Ovary (tissue), 10 donors: ENCODE measurements at regions of chr2 and their contacts with region 1.

Region 1: DNA sequence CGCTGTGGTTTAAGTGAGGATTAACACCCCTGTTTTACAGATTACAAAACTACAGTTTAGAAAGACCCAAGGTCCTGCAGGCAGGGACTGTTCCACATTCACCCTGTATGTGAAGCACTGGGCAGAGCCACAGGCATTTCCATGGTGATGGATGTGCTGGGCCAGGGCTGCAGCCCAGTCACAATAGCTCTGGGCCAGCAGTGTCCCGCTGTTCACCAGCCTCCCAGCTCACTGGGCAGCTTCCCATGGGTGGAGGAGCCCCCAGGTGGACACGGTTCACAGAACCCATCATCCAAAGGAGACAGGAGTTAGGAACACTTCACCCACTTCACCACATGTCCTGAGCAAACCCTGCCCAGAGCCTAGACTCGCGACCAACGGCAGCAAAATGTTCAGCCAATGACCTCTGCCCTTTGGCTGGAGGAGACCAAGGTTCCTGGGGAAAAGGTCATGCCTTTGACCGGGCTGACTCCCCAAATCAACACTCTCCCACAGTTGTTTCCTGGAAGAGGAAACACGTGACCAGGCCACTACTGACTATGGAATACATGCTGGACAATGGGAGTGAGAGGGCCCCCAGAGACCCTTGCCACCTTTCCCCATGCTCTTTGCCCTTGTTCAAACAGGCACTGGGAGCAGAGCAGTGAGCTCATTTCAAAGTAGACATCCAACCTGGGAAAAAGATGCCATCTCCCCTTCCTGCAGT is 28.0 kb upstream of the SLC35F6 start:
- DNase-seq: no peak
- H3K4me3 ChIP-seq: no peak overlapping the region
- H3K27ac ChIP-seq: no peak overlapping the region
- H3K4me1 ChIP-seq: peaks cover 4% of the 10 kb centered on the region
- H3K27me3 ChIP-seq: no peaks in the 10 kb centered on the region
- CTCF ChIP-seq: no peak
- EP300 ChIP-seq: no peak
- POLR2A ChIP-seq: no peak

Region 2: DNA sequence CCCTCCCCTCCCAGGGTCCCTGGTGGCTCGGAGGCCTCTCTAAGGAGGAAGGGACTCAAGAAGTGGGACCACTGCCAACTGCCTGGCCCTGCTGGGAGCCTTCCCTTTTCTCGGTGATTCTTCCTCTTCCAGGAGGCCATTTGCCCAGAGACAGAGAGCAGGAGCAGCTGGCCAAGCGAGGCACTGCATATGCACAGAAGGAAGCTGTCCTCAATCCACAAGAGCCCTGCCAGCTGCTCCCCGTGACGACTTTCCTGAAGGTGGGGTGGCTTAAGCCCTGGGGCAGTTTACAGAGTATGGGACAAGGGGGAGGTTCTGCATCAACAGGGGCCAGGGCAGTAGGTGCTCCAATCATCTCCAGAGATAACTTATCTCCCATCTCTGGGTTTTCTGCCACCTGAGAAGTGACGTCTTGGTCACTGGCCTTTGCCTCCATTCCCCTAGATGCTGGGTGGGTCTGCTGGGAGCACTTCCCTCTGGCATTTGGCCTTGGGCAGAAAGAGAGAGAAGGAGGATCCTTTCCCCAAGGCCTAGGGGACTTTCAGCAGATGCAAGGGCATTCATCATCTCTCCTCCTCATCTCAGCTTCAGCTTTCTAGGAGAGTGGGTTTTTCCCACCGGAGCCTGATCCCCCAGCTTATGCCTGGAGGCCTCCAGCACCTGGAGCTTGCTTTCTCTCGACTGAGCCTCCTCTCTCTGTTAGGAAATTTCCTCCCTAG is 123.4 kb before region 1 on chr2:
- intact Hi-C with region 1: loop called in 2 of 4 experiments (anchors 2 to 5 kb)
- DNase-seq: peak in 2 of 5 donors; percentile 35 to 44
- H3K4me3 ChIP-seq: no peak overlapping the region
- H3K27ac ChIP-seq: no peak overlapping the region
- H3K4me1 ChIP-seq: peaks cover 14% of the 10 kb centered on the region
- H3K27me3 ChIP-seq: no peaks in the 10 kb centered on the region
- CTCF ChIP-seq: no peak
- EP300 ChIP-seq: no peak
- POLR2A ChIP-seq: no peak

Region 3: GRCh38 chr2:27050281-27050995 is 314.4 kb after region 1 on chr2:
- intact Hi-C with region 1: no loop called
- DNase-seq: peak; percentile 90 to 95 (median 94)
- H3K4me3 ChIP-seq: peak overlapping the region; percentile 93
- H3K27ac ChIP-seq: peak overlapping the region; percentile 74 to 87
- H3K4me1 ChIP-seq: peaks cover 5% of the 10 kb centered on the region
- H3K27me3 ChIP-seq: no peaks in the 10 kb centered on the region
- CTCF ChIP-seq: peak in 2 of 3 donors; percentile 66 to 82
- EP300 ChIP-seq: no peak
- POLR2A ChIP-seq: no peak